ENCODE measurements at regions of chr11 and their contacts with region 1.

Region 1: DNA sequence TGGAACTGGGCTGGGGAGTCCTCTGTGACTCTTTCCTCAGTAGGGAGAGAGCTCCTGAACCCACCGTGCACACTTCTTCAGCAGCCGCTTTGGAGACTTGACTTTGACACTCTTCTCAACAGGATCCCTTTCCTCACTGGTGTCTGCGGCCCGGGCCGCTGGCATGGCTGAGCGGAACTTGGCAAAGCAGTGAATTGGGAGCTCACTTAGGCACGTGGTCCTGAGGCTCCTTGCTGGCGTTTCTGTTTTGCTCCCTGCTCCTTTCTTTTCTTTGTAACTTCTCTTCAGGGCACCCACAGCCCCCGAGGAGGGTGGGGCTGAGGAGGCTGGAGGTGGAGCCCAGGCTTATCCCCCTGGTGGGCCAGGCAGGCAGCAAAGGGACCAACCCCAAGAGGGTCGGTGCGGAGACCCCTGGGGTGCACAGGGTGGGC is 8.4 kb upstream of the KCNQ1OT1 start:
- DNase-seq: no peak
- ATAC-seq: no peak; a peak in 1 of 6 replicates
- H3K4me3 ChIP-seq: no peak overlapping the region
- H3K27ac ChIP-seq: no peak overlapping the region
- H3K4me1 ChIP-seq: no peaks in the 10 kb centered on the region
- CTCF ChIP-seq: no peak
- EP300 ChIP-seq: no peak
- POLR2A ChIP-seq: no peak
- RAD21 ChIP-seq: no peak

Region 2: GRCh38 chr11:2718817-2719438 is 10.8 kb after region 1 on chr11:
- CTCF ChIA-PET with region 1: interaction called, 10 read pairs
- POLR2A ChIA-PET with region 1: no interaction called
- DNase-seq: no peak
- ATAC-seq: no peak
- H3K4me3 ChIP-seq: no peak overlapping the region
- H3K27ac ChIP-seq: no peak overlapping the region
- H3K4me1 ChIP-seq: no peaks in the 10 kb centered on the region
- CTCF ChIP-seq: no peak
- EP300 ChIP-seq: no peak
- POLR2A ChIP-seq: no peak
- RAD21 ChIP-seq: no peak

Measured in A549 (cell line).